ENCODE measurements at regions of chr3 and their contacts with region 1.

Region 1: DNA sequence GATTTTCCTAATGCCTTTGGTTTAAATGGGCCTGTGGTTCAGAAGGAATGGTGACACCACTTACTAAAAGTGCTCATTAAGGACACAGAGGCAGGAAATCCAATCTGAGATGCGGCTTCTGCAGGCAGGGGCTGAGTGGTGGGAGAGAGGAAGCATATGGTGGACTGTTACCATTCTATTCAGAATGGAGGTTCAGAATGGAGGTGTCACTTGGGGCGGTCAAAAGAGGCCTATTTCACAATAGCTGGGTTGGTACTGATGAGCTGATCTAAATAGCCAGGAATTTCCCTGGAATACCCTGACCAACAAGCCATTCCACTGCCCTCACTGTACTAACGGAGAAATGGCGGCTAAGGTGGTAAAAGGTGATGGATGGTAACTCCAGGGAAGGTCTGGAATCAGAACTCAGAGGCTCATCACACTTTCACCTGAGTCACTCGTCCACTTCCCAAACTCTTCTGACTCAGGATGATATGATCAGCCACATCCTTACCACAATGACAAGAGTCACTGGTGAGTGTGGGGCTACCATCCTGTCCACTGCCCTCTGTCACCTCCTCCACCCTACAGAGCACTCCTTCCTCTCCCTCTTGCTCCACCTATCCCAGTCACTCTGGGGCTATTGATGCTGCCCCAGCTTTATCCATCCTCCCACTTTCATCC is 15.7 kb downstream of the RFT1 start:
- DNase-seq: no peak
- ATAC-seq: peak in 3 of 4 donors; percentile 10 to 48 (median 40)
- H3K4me3 ChIP-seq: no peak overlapping the region
- H3K27ac ChIP-seq: no peak overlapping the region
- H3K4me1 ChIP-seq: peaks cover 0 to 14% (median 0%) of the 10 kb centered on the region in 4 donors
- H3K27me3 ChIP-seq: no peaks in the 10 kb centered on the region
- CTCF ChIP-seq: no peak
- POLR2A ChIP-seq: no peak

Region 2: DNA sequence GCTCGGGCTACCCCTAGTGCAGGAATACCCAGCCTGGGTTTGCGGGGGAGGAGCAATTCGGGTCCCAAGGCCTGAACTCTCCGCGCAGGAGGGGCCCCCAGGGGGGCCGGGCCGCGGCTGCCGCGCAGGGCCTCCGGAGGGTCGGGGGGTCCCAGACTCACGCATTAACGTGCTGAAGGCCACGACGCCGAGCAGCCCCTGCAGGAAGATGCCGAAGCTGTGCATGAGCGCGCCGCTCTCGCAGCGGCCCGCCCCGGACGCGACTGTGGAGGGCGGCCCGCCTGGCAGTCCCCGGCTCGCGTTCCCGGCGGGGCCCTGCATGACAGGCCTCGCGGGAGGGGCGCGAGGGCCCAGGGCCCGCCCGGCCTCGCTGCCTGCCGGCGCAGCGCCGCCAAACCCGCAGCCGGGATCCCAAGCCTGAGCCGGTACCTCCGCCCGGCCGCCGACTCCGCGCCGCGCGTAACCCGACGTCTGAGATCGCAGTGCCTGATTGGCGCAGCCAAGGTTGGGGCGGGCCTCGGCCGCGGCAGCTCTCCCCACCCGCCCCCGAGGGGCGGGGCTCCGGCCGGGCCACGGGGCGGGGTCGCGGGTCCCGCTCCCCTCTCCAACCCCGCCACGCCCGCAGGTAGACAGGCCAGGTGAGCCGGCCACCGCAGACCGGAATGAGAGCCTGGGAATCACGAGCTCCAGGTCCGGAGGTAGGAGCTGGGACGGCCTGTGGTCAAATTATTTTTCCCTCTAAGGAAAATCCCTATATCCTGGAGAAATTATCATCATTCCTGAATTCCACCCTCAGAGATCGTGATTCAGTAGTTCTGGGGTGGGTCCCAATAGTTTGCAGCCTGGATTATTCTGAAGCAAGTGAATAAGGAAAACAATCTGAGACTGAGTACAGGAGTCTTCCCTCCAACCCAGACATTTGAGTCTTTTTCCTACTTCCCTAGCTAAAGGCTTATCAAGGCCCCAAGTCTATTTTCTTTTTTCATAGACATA is 217.1 kb before region 1 on chr3 and contains the start of gene STIMATE:
- intact Hi-C with region 1: no loop called
- DNase-seq: peak; percentile 91 to 93 (median 92)
- ATAC-seq: peak; percentile 90 to 95 (median 91)
- H3K4me3 ChIP-seq: peak within 1 kb of the TSS; percentile 74 to 88 (median 82)
- H3K27ac ChIP-seq: peak within 1 kb of the TSS in 2 of 3 donors; percentile 38 to 65
- H3K4me1 ChIP-seq: peaks cover 0 to 40% (median 8%) of the 10 kb centered on the region in 4 donors
- H3K27me3 ChIP-seq: no peaks in the 10 kb centered on the region
- CTCF ChIP-seq: peak in 1 of 4 donors; percentile 2
- POLR2A ChIP-seq: peak; percentile 73
- total RNA-seq, gene STIMATE: 17.4 to 48.5 (median 33.8) TPM

Region 3: GRCh38 chr3:52915294-52915693 is 199.2 kb before region 1 on chr3:
- intact Hi-C with region 1: no loop called
- DNase-seq: no peak
- ATAC-seq: peak; percentile 56 to 88 (median 84)
- H3K4me3 ChIP-seq: no peak overlapping the region
- H3K27ac ChIP-seq: peak overlapping the region in 2 of 3 donors; percentile 24 to 33
- H3K4me1 ChIP-seq: peaks cover 0 to 11% (median 0%) of the 10 kb centered on the region in 4 donors
- H3K27me3 ChIP-seq: no peaks in the 10 kb centered on the region
- CTCF ChIP-seq: no peak
- POLR2A ChIP-seq: no peak

Region 4: GRCh38 chr3:53194210-53194499 is 79.6 kb after region 1 on chr3:
- intact Hi-C with region 1: loop called in 1 of 2 experiments (anchors 5 kb)
- DNase-seq: no peak
- ATAC-seq: no peak
- H3K4me3 ChIP-seq: no peak overlapping the region
- H3K27ac ChIP-seq: no peak overlapping the region
- H3K4me1 ChIP-seq: peaks cover 0 to 4% (median 0%) of the 10 kb centered on the region in 4 donors
- H3K27me3 ChIP-seq: no peaks in the 10 kb centered on the region
- CTCF ChIP-seq: no peak
- POLR2A ChIP-seq: no peak

Region 5: DNA sequence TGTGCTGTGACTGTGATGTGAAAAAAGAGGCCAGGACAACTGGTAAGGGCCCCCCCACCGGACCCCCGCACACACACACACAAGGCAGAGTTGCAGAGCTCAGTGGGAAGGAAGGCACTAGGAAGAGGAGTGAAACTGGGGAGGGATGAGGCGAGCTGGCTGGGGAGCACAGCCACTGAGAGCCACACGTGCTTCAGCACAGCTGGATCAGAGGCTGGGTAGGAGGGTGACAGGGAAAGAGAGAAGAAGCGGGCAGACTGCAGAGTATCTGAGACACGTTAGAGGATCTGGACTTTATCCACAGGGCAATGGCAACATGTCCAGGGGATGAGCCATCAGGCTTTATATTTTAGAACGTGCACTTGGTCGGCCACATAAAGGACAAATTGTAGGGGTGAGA is 179.3 kb after region 1 on chr3:
- intact Hi-C with region 1: no loop called
- DNase-seq: no peak
- ATAC-seq: no peak
- H3K4me3 ChIP-seq: no peak overlapping the region
- H3K27ac ChIP-seq: no peak overlapping the region
- H3K4me1 ChIP-seq: no peaks in the 10 kb centered on the region
- H3K27me3 ChIP-seq: no peaks in the 10 kb centered on the region
- CTCF ChIP-seq: no peak
- POLR2A ChIP-seq: no peak

Measured in right lobe of liver (tissue), 6 donors.